ENCODE measurements at regions of chr2 and their contacts with region 1.

Region 1: GRCh38 chr2:88055371-88056128 is at the start of gene KRCC1:
- DNase-seq: peak; percentile 93
- H3K4me3 ChIP-seq: peak within 1 kb of the TSS; percentile 88 to 99 (median 93)
- H3K27ac ChIP-seq: peak within 1 kb of the TSS; percentile 84
- H3K4me1 ChIP-seq: peaks cover 0 to 9% (median 4%) of the 10 kb centered on the region in 4 experiments; a peak in 5 of 7 replicates
- H3K27me3 ChIP-seq: no peaks in the 10 kb centered on the region
- CTCF ChIP-seq: no peak
- EP300 ChIP-seq: no peak
- POLR2A ChIP-seq: peak; percentile 79 to 86
- RAD21 ChIP-seq: no peak
- total RNA-seq, gene KRCC1: 7.7 and 8.5 TPM in 2 replicates

Region 2: DNA sequence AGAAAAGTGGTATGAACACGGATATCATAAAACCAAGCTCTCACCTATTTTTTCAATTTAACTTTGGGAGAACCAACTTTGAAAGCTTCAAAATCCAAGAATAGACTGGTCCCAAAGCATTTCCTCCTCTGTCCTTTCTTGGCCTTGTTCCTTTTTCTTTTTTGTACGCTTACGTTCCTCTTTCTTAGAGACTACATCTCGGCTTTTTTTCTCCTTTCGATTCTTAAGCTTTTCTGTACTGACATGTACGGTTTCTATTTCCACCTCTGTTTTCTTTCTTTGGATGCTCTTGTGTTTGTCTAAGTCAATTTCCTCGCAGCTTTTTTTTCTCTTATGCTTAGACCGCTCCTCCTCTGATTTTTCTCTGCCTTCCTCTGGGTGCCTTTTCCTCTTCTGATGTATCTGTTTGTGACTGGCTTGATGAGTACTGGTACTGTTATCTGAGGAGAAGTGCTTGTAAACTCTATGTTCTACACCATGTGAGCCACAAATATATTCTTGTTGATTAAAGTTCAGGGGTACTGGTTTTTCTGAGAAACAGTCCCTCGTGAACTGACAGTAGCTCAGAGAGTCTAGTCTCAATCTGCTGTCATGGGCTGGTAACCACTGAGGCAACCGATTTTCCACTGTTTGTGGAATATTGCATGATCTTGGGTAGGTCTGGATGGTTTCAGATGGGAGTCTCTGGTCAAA is 27.7 kb before region 1 on chr2:
- CTCF ChIA-PET with region 1: interaction called, 10 read pairs
- POLR2A ChIA-PET with region 1: interaction called, 5 read pairs
- DNase-seq: no peak
- H3K4me3 ChIP-seq: no peak overlapping the region
- H3K27ac ChIP-seq: no peak overlapping the region
- H3K4me1 ChIP-seq: no peaks in the 10 kb centered on the region; a peak in 2 of 7 replicates
- H3K27me3 ChIP-seq: no peaks in the 10 kb centered on the region
- CTCF ChIP-seq: no peak
- EP300 ChIP-seq: no peak
- POLR2A ChIP-seq: no peak
- RAD21 ChIP-seq: no peak

Region 3: GRCh38 chr2:88082781-88083180 is 27.2 kb after region 1 on chr2:
- CTCF ChIA-PET with region 1: interaction called, 50 read pairs
- POLR2A ChIA-PET with region 1: no interaction called
- DNase-seq: no peak
- H3K4me3 ChIP-seq: no peak overlapping the region
- H3K27ac ChIP-seq: no peak overlapping the region
- H3K4me1 ChIP-seq: peaks cover 1 to 6% (median 4%) of the 10 kb centered on the region in 4 experiments; a peak in 6 of 7 replicates
- H3K27me3 ChIP-seq: no peaks in the 10 kb centered on the region
- CTCF ChIP-seq: no peak
- EP300 ChIP-seq: no peak
- POLR2A ChIP-seq: no peak
- RAD21 ChIP-seq: no peak

Region 4: DNA sequence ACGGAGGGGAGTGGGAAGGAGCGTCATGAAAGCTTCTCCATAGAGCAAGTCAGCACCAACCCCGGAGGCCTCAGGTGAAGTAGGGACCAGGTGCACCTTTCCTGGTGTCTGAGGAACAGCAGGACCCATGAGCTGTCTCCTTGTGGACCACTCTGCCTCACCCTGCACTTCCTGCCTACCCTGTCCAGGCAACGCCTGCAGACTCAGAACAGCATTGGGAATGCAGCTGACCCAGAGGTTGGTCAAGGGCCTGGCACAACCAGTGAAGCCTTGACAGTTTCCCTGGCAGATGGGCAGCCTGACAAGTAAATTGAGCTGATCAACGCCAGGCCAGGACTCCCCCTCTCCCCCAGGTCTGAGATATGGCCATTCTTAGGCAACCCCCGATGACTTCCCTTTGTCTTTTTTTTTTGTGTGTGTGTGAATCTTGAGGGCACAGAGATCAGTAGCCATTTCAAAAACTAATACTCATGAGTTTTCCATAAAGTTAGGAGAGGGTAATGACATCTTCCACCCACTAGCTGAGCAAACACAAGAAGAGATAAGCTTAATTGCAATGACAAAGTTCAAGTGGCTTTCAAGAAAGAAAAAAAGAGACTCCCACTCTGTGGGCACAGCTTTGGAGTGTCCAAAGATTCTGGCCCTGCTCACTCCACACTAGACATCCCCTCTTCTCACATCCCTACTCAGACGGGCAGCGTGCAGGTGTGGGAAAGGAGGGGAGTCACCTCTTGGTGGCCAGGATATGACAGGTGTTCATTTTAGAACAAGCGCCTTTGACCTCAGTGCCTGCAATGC is 75.8 kb after region 1 on chr2:
- CTCF ChIA-PET with region 1: interaction called, 22 read pairs
- POLR2A ChIA-PET with region 1: no interaction called
- DNase-seq: no peak
- H3K4me3 ChIP-seq: no peak overlapping the region
- H3K27ac ChIP-seq: no peak overlapping the region
- H3K4me1 ChIP-seq: no peaks in the 10 kb centered on the region
- H3K27me3 ChIP-seq: no peaks in the 10 kb centered on the region
- CTCF ChIP-seq: no peak
- EP300 ChIP-seq: no peak
- POLR2A ChIP-seq: no peak
- RAD21 ChIP-seq: no peak

Region 5: DNA sequence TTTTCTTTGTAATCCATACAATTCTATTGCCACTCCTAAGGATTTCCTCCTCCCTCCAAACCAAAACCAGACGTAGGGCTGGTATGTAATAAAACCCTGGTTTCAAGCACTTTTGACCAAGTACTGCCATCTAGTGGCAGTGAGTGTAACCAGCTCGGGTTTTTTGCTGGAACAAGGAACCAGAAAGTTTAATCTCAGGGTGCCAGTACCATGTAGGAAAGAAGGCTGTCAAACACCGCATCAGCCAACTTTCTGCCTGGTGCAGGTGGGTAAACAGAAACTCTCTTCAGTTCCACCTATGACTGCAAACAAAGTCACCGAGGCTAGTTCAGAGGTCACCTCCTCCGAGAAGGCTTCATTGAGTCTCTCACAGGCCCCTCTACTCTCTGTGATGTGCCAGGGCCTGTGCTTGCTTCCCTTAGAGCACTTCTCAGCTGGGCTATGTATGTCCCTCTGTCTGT is 104.4 kb after region 1 on chr2:
- CTCF ChIA-PET with region 1: interaction called, 134 read pairs
- POLR2A ChIA-PET with region 1: interaction called, 6 read pairs
- DNase-seq: no peak
- H3K4me3 ChIP-seq: no peak overlapping the region
- H3K27ac ChIP-seq: no peak overlapping the region
- H3K4me1 ChIP-seq: peaks cover 0 to 6% (median 0%) of the 10 kb centered on the region in 4 experiments; a peak in 2 of 7 replicates
- H3K27me3 ChIP-seq: no peaks in the 10 kb centered on the region
- CTCF ChIP-seq: peak in 2 of 3 experiments; percentile 78 to 85; a peak in 3 of 4 replicates
- EP300 ChIP-seq: no peak
- POLR2A ChIP-seq: no peak
- RAD21 ChIP-seq: peak; percentile 94 to 97

Region 6: DNA sequence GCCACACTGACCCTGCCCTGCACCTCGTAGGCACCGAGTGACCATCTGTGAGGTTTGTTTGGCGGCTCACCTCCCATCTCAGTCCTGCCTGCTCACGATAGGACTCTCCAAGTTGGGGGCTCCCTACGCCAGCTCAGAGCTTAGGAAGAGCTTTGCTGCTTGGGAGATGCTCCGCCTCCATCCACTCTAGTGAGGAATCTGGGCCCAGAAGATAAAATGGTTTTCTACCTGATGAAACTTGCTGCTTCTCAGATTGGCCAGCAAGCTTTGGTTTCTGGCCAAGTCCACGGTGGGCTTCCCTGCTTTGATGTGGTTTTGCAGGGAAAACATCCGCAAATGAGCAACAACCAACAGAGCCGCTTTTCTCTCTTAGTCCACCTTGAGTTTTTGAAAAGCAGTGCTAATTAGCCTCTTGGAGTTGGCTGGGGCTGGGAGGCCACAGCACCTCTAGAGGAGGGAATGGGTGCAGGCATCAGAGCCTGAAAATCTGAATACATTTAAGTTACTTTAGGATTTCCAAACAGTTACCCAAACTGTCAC is 156.8 kb after region 1 on chr2:
- CTCF ChIA-PET with region 1: interaction called, 10 read pairs
- POLR2A ChIA-PET with region 1: no interaction called
- DNase-seq: peak in 1 of 2 experiments; percentile 54
- H3K4me3 ChIP-seq: peak overlapping the region in 1 of 4 experiments; percentile 41; a peak in 1 of 8 replicates
- H3K27ac ChIP-seq: peak overlapping the region; percentile 58; the same call in 1 of the 2 replicates
- H3K4me1 ChIP-seq: peaks cover 4 to 5% (median 4%) of the 10 kb centered on the region in 4 experiments; a peak in 6 of 7 replicates
- H3K27me3 ChIP-seq: no peaks in the 10 kb centered on the region
- CTCF ChIP-seq: peak; percentile 61 to 85 (median 76)
- EP300 ChIP-seq: no peak
- POLR2A ChIP-seq: no peak
- RAD21 ChIP-seq: peak; percentile 43 to 56; a peak in 3 of 4 replicates

Region 7: DNA sequence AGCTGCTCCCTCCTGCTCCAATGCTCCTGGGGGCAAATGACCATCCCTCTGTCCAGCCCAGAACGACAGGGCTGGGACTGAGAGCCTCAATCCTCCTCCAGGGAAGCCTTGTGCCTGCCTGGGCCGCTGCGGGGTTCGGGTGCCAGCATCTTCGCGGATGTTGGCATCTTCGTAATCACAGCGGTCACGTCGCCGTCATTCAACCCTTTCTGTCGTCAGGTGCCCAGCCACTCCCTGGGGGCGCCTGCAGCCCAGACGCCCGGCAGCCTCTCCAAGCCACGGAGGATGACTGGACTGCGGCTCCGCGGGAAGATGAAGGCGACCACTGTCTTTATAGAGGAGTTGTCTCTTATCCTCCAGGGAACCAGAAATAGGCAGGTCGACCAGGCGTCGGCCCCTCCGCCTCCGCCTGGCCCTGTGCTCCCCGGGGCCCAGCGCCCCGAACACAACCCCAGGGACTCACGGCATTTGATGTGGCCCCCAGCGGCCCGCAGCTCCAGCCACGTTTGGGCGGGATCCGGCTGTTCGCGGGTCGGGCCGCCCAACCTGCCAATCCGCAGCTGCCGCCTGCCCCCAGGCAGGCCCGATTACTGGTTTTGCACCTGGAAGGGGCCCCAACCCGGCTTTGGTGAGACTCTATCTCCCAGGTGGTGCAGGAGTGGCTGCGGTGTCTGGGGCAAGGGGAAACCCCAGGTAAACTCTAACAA is 228.5 kb after region 1 on chr2:
- CTCF ChIA-PET with region 1: no interaction called
- POLR2A ChIA-PET with region 1: no interaction called
- DNase-seq: peak in 1 of 2 experiments; percentile 47
- H3K4me3 ChIP-seq: no peak overlapping the region
- H3K27ac ChIP-seq: no peak overlapping the region
- H3K4me1 ChIP-seq: no peaks in the 10 kb centered on the region
- H3K27me3 ChIP-seq: no peaks in the 10 kb centered on the region
- CTCF ChIP-seq: no peak
- EP300 ChIP-seq: no peak
- POLR2A ChIP-seq: no peak
- RAD21 ChIP-seq: no peak

Region 8: GRCh38 chr2:88296247-88296646 is 240.7 kb after region 1 on chr2:
- CTCF ChIA-PET with region 1: no interaction called
- POLR2A ChIA-PET with region 1: no interaction called
- DNase-seq: no peak
- H3K4me3 ChIP-seq: no peak overlapping the region
- H3K27ac ChIP-seq: no peak overlapping the region
- H3K4me1 ChIP-seq: no peaks in the 10 kb centered on the region
- H3K27me3 ChIP-seq: no peaks in the 10 kb centered on the region
- CTCF ChIP-seq: no peak
- EP300 ChIP-seq: no peak
- POLR2A ChIP-seq: no peak
- RAD21 ChIP-seq: no peak

Region 9: GRCh38 chr2:88396209-88396608 is 340.7 kb after region 1 on chr2:
- CTCF ChIA-PET with region 1: no interaction called
- POLR2A ChIA-PET with region 1: no interaction called
- DNase-seq: no peak
- H3K4me3 ChIP-seq: no peak overlapping the region
- H3K27ac ChIP-seq: no peak overlapping the region
- H3K4me1 ChIP-seq: no peaks in the 10 kb centered on the region
- H3K27me3 ChIP-seq: no peaks in the 10 kb centered on the region
- CTCF ChIP-seq: no peak
- EP300 ChIP-seq: no peak
- POLR2A ChIP-seq: no peak
- RAD21 ChIP-seq: no peak